ENCODE measurements at regions of chr16 and their contacts with region 1.

Region 1: GRCh38 chr16:1509307-1510221 is 16.4 kb downstream of the TELO2 start:
- DNase-seq: no peak
- H3K4me3 ChIP-seq: no peak overlapping the region
- H3K4me3 Mint-ChIP-seq: no peak overlapping the region
- H3K27ac ChIP-seq: no peak overlapping the region
- H3K27ac Mint-ChIP-seq: no peak overlapping the region
- H3K4me1 ChIP-seq: no peaks in the 10 kb centered on the region
- H3K4me1 Mint-ChIP-seq: no peaks in the 10 kb centered on the region
- H3K27me3 ChIP-seq: no peaks in the 10 kb centered on the region
- H3K27me3 Mint-ChIP-seq: no peaks in the 10 kb centered on the region
- CTCF ChIP-seq: no peak

Region 2: GRCh38 chr16:1458336-1458976 is 51.1 kb before region 1 on chr16:
- intact Hi-C with region 1: loop called in 1 of 2 experiments (anchors 10 kb)
- DNase-seq: peak in 2 of 3 donors; percentile 17 to 38
- H3K4me3 ChIP-seq: no peak overlapping the region
- H3K4me3 Mint-ChIP-seq: no peak overlapping the region
- H3K27ac ChIP-seq: no peak overlapping the region
- H3K27ac Mint-ChIP-seq: peak overlapping the region in 4 of 7 donors; percentile 50 to 86 (median 66)
- H3K4me1 ChIP-seq: no peaks in the 10 kb centered on the region
- H3K4me1 Mint-ChIP-seq: no peaks in the 10 kb centered on the region
- H3K27me3 ChIP-seq: no peaks in the 10 kb centered on the region
- H3K27me3 Mint-ChIP-seq: peaks cover 0 to 2% (median 0%) of the 10 kb centered on the region in 3 donors
- CTCF ChIP-seq: no peak

Region 3: GRCh38 chr16:1564325-1564724 is 54.8 kb after region 1 on chr16:
- intact Hi-C with region 1: no loop called
- DNase-seq: peak in 2 of 3 donors; percentile 5 to 16
- H3K4me3 ChIP-seq: no peak overlapping the region
- H3K4me3 Mint-ChIP-seq: no peak overlapping the region
- H3K27ac ChIP-seq: no peak overlapping the region
- H3K27ac Mint-ChIP-seq: peak overlapping the region in 1 of 7 donors; percentile 47
- H3K4me1 ChIP-seq: no peaks in the 10 kb centered on the region
- H3K4me1 Mint-ChIP-seq: no peaks in the 10 kb centered on the region
- H3K27me3 ChIP-seq: no peaks in the 10 kb centered on the region
- H3K27me3 Mint-ChIP-seq: peaks cover 0 to 1% (median 0%) of the 10 kb centered on the region in 3 donors
- CTCF ChIP-seq: peak; percentile 36